MCF 10A (cell line): ENCODE measurements at regions of chr2 and their contacts with region 1.

Region 1: DNA sequence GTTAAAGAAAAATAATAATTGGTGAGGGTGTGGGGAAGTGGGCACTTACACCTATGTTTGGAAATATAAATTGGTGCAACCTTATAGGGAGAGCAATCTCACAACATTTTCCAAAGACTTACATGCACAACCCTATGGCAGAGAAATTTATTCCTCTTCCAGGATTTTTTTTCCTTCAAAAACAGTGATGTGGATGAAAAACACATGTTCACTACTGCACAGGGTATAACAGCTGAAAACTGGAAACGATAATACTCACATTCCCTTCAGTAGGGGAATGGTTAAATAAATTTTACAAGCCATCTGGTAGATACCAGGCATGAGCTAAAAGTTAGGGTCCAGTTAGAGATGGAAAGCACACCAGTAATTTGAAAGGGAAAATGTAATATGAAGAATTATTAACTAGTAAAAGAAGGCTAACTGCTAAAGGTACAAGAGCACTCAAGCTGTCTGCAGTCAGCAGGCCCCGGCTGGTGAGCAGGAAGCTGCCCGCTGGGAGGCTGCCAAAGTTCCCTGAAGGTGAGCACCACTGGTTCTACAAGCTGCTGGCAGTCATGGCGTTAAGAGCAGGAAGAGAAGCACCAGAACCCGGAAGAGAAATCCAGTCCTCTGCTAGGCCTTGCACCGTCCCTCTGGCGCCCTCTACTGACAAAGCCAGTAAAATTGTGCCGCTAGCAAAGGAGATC is 28.4 kb upstream of the CASP8 start:
- DNase-seq: peak; percentile 96
- H3K4me3 Mint-ChIP-seq: peak overlapping the region; percentile 94
- H3K27ac Mint-ChIP-seq: peak overlapping the region; percentile 63
- H3K4me1 Mint-ChIP-seq: peaks cover 30% of the 10 kb centered on the region
- H3K27me3 Mint-ChIP-seq: no peaks in the 10 kb centered on the region
- CTCF ChIP-seq: peak; percentile 89

Region 2: DNA sequence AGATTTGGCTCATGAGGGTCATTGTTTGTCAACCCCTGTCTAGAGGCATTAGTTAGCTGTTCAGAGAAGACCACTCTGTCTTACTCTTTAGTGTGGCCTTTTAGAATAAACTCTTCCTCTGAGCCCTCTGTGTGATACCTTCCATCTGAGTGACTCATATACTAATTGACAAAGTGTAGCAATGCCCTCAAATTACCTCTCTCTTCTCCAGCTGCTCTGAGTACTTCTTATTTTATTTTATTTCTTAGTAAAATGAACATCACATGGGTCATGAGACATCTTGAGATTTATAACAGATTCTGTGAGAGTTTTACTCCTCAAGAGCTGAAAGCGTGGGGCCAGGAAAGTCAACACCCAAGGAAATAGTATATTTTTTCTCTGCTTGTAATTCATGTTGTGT is 789.5 kb before region 1 on chr2:
- CTCF ChIA-PET with region 1: no interaction called
- POLR2A ChIA-PET with region 1: no interaction called
- intact Hi-C with region 1: no loop called
- DNase-seq: no peak
- H3K4me3 Mint-ChIP-seq: no peak overlapping the region
- H3K27ac Mint-ChIP-seq: no peak overlapping the region
- H3K4me1 Mint-ChIP-seq: no peaks in the 10 kb centered on the region
- H3K27me3 Mint-ChIP-seq: no peaks in the 10 kb centered on the region
- CTCF ChIP-seq: no peak

Region 3: GRCh38 chr2:200963124-200963917 is 268.6 kb before region 1 on chr2 and contains the start of gene ORC2:
- CTCF ChIA-PET with region 1: interaction called, 31 read pairs
- POLR2A ChIA-PET with region 1: interaction called, 21 read pairs
- intact Hi-C with region 1: loop called (anchors 5 kb)
- DNase-seq: peak; percentile 96
- H3K4me3 Mint-ChIP-seq: peak within 1 kb of the TSS; percentile 86
- H3K27ac Mint-ChIP-seq: peak within 1 kb of the TSS; percentile 76
- H3K4me1 Mint-ChIP-seq: peaks cover 52% of the 10 kb centered on the region
- H3K27me3 Mint-ChIP-seq: no peaks in the 10 kb centered on the region
- CTCF ChIP-seq: peak; percentile 61
- total RNA-seq, gene ORC2: 51.5 and 54.4 TPM in 2 replicates

Region 4: GRCh38 chr2:201040867-201041628 is 190.9 kb before region 1 on chr2:
- CTCF ChIA-PET with region 1: no interaction called
- POLR2A ChIA-PET with region 1: no interaction called
- intact Hi-C with region 1: no loop called
- DNase-seq: no peak
- H3K4me3 Mint-ChIP-seq: no peak overlapping the region
- H3K27ac Mint-ChIP-seq: no peak overlapping the region
- H3K4me1 Mint-ChIP-seq: no peaks in the 10 kb centered on the region
- H3K27me3 Mint-ChIP-seq: no peaks in the 10 kb centered on the region
- CTCF ChIP-seq: no peak

Region 5: GRCh38 chr2:201118121-201118960 is 113.6 kb before region 1 on chr2:
- CTCF ChIA-PET with region 1: interaction called, 30 read pairs
- POLR2A ChIA-PET with region 1: interaction called, 82 read pairs
- intact Hi-C with region 1: loop called (anchors 2 kb)
- DNase-seq: peak; percentile 98
- H3K4me3 Mint-ChIP-seq: peak overlapping the region; percentile 93
- H3K27ac Mint-ChIP-seq: peak overlapping the region; percentile 98
- H3K4me1 Mint-ChIP-seq: peaks cover 31% of the 10 kb centered on the region
- H3K27me3 Mint-ChIP-seq: no peaks in the 10 kb centered on the region
- CTCF ChIP-seq: peak; percentile 36

Region 6: DNA sequence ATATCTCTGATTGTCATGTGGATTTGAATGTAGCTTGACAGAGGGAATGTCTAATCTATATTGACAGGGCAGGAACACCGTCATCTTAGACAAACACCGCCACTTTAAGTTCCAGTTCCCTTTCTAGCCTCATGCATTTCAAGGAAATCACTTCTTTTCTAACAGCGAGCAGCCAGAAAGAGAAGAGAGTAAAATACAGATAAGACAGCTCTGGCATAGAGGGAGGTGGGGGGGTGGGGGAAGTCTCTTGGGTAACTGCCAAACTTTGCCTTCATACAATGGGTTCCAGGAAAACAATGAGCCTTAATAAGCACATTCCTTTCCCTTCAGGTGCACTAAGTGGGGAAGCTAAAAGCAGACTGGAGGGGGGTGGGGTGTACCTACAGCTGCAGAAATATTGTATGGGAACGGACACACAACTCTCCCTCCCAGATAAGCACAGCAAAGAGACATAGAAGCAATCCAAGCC is 11.8 kb before region 1 on chr2:
- CTCF ChIA-PET with region 1: interaction called, 56 read pairs
- POLR2A ChIA-PET with region 1: interaction called, 5 read pairs
- intact Hi-C with region 1: no loop called
- DNase-seq: peak; percentile 61
- H3K4me3 Mint-ChIP-seq: no peak overlapping the region
- H3K27ac Mint-ChIP-seq: no peak overlapping the region
- H3K4me1 Mint-ChIP-seq: no peaks in the 10 kb centered on the region
- H3K27me3 Mint-ChIP-seq: no peaks in the 10 kb centered on the region
- CTCF ChIP-seq: no peak

Region 7: GRCh38 chr2:201414099-201415023 is 182.4 kb after region 1 on chr2:
- CTCF ChIA-PET with region 1: interaction called, 10 read pairs
- POLR2A ChIA-PET with region 1: no interaction called
- intact Hi-C with region 1: no loop called
- DNase-seq: no peak
- H3K4me3 Mint-ChIP-seq: no peak overlapping the region
- H3K27ac Mint-ChIP-seq: no peak overlapping the region
- H3K4me1 Mint-ChIP-seq: peaks cover 19% of the 10 kb centered on the region
- H3K27me3 Mint-ChIP-seq: no peaks in the 10 kb centered on the region
- CTCF ChIP-seq: no peak

Region 8: GRCh38 chr2:201707753-201708152 is 475.8 kb after region 1 on chr2:
- CTCF ChIA-PET with region 1: no interaction called
- POLR2A ChIA-PET with region 1: interaction called, 3 read pairs
- intact Hi-C with region 1: loop called (anchors 10 kb)
- DNase-seq: peak; percentile 3
- H3K4me3 Mint-ChIP-seq: no peak overlapping the region
- H3K27ac Mint-ChIP-seq: no peak overlapping the region
- H3K4me1 Mint-ChIP-seq: no peaks in the 10 kb centered on the region
- H3K27me3 Mint-ChIP-seq: no peaks in the 10 kb centered on the region
- CTCF ChIP-seq: no peak

Region 9: DNA sequence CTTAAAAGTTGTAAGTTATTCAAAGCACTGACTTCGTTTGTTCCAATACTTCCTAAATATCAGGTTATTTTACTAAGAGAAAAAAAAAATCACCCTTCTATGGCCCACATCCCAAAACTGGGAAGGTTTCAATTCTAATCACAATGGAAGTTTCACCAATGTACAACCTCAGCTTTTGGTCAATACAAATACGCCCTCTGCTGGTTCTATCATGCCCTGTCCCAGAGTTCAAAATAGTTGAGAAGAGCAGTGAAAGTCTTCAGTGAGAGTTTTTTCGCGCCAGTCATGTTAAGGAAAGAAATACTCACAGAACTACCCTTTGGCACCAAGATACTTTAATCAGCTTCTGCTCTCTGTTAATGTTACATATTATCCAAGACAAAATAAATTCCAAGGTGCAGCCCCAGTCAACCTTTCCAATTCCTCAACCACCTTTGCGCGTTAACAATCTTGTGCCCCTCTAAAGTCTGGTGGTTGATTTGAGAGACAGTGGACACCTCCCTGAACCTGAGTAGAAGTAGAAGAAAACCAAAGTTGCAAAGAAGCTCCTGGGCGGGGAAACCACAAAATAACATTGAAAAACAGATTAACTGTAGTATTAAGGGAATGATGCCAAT is 946.5 kb after region 1 on chr2:
- CTCF ChIA-PET with region 1: interaction called, 4 read pairs
- POLR2A ChIA-PET with region 1: no interaction called
- intact Hi-C with region 1: loop called (anchors 1 kb)
- DNase-seq: peak; percentile 71
- H3K4me3 Mint-ChIP-seq: no peak overlapping the region
- H3K27ac Mint-ChIP-seq: no peak overlapping the region
- H3K4me1 Mint-ChIP-seq: no peaks in the 10 kb centered on the region
- H3K27me3 Mint-ChIP-seq: no peaks in the 10 kb centered on the region
- CTCF ChIP-seq: peak; percentile 74